Tibial artery (tissue), 4 donors: ENCODE measurements at regions of chr22 and their contacts with region 1.

Region 1: GRCh38 chr22:20916983-20917810 is at the start of gene CRKL:
- DNase-seq: peak; percentile 95 to 98
- H3K4me3 ChIP-seq: peak within 1 kb of the TSS; percentile 97 to 98
- H3K27ac ChIP-seq: peak within 1 kb of the TSS; percentile 97
- H3K4me1 ChIP-seq: peaks cover 0 to 34% (median 21%) of the 10 kb centered on the region in 4 donors
- H3K27me3 ChIP-seq: no peaks in the 10 kb centered on the region
- CTCF ChIP-seq: peak; percentile 93 to 95

Region 2: DNA sequence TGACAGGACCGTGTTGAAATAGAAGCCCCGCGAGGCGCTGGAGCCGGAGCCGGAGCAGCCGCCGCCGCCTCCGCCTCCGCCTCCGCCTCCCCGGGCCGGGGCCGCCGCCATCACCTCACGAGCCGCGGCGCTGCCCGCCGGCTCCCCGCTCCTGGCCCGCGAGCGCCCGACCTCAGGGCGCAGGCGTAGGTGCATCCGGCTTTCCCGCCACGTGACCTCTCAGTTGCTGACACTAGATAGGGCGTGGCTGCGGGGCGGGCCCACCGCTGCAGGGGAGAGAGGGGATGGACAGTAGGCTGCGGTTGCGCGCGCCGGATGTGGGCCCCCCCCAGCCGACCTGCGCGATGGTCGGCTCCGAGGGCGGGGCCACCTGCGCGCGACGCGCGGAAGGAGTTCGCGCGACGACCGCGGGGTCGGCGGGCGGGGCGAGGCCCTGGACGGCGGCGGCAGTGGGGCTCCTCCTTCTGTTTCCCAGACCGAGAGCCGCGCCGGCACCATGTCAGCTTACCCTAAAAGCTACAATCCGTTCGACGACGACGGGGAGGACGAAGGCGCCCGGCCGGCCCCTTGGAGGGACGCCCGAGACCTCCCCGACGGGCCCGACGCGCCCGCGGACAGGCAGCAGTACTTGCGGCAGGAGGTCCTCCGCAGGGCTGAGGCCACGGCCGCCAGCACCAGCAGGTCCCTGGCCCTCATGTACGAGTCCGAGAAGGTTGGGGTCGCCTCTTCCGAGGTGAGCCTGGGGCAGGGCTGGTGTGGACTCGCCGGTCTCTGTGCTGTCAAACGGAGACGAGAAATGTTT is 58.4 kb before region 1 on chr22 and contains the starts of genes PI4KA and SNAP29:
- intact Hi-C with region 1: loop called (anchors 2 kb)
- DNase-seq: peak; percentile 99 to 100
- H3K4me3 ChIP-seq: peak within 1 kb of the TSS; percentile 82 to 92
- H3K27ac ChIP-seq: peak within 1 kb of the TSS; percentile 79 to 93
- H3K4me1 ChIP-seq: peaks cover 0 to 38% (median 23%) of the 10 kb centered on the region in 4 donors
- H3K27me3 ChIP-seq: no peaks in the 10 kb centered on the region
- CTCF ChIP-seq: peak in 1 of 2 experiments; percentile 29

Region 3: GRCh38 chr22:20998411-20999336 is 81.5 kb after region 1 on chr22:
- intact Hi-C with region 1: loop called (anchors 5 kb)
- DNase-seq: no peak
- H3K4me3 ChIP-seq: no peak overlapping the region
- H3K27ac ChIP-seq: no peak overlapping the region
- H3K4me1 ChIP-seq: peaks cover 10 to 34% (median 28%) of the 10 kb centered on the region in 4 donors
- H3K27me3 ChIP-seq: no peaks in the 10 kb centered on the region
- CTCF ChIP-seq: no peak